AG04449 (cell line): ENCODE measurements at regions of chr15 and their contacts with region 1.

Region 1: DNA sequence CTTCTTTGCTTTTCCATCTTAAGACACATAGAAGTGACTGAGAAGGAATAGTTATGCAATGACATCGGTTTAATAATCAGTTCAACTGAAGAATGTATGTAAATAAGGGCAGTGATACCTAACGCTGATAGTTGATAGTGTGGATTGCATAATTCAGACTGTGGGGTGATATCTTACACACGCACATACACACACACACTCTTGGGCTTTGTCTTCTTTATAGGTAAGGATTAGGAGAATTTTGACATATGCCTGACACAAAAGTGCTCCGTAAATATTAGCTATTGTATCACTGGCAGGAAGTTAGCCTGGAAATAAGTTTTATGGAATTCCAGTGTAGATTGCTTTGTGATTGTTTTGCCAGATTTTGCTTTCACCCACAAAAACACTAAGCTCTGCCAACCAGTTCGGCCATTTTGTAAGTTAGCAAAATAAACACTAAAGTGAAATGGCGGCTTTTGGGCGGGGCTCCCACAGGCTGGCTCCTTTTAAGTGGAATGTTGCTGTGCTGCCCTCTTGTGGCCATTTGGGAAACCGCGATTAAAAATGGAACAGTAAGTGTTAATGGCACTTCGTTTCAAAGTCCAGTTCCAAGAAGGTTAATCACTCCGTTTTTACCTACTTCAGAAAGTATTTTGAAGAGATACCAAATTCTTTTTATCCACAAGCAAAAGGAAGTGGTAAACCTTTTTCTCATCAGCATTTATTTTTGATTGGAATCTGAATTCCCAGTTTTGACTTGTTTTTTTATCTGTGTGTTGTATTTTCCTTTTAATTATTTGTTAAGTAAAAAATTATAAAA is 17.7 kb downstream of the CHD2 start:
- DNase-seq: peak; percentile 54
- H3K4me3 ChIP-seq: no peak overlapping the region
- CTCF ChIP-seq: peak; percentile 64

Region 2: GRCh38 chr15:92693691-92694331 is 224.0 kb before region 1 on chr15:
- CTCF ChIA-PET with region 1: no interaction called
- POLR2A ChIA-PET with region 1: no interaction called
- DNase-seq: no peak
- H3K4me3 ChIP-seq: no peak overlapping the region
- CTCF ChIP-seq: peak; percentile 40

Region 3: DNA sequence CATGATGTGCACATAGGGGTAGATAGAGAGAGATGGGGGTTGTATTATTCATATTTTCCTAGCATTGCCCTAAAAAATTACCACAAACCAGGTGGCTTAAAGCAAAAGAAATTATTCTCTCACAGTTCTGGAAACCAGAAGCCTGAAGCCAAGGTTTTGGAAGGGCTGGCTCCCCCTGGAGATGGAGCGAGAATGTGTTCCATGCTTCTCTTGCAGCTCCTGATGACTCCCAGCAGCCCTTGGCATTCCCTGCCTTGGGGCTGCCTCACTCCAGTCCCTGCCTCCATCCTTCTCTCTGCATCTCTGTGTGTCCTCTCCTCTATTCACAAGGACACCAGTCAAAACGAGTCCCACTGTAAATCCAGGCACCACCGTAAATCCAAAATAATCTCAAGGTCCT is 170.8 kb before region 1 on chr15:
- CTCF ChIA-PET with region 1: no interaction called
- POLR2A ChIA-PET with region 1: no interaction called
- DNase-seq: no peak
- H3K4me3 ChIP-seq: no peak overlapping the region
- CTCF ChIP-seq: no peak

Region 4: GRCh38 chr15:92803847-92804609 is 113.8 kb before region 1 on chr15:
- CTCF ChIA-PET with region 1: interaction called, 118 read pairs
- POLR2A ChIA-PET with region 1: interaction called, 7 read pairs
- DNase-seq: peak; percentile 100
- H3K4me3 ChIP-seq: no peak overlapping the region
- CTCF ChIP-seq: no peak

Region 5: GRCh38 chr15:92808978-92809879 is 108.6 kb before region 1 on chr15:
- CTCF ChIA-PET with region 1: interaction called, 51 read pairs
- POLR2A ChIA-PET with region 1: interaction called, 7 read pairs
- DNase-seq: no peak
- H3K4me3 ChIP-seq: peak overlapping the region; percentile 60
- CTCF ChIP-seq: peak; percentile 73

Region 6: GRCh38 chr15:92903941-92904831 is 13.6 kb before region 1 on chr15:
- CTCF ChIA-PET with region 1: interaction called, 75 read pairs
- POLR2A ChIA-PET with region 1: interaction called, 5 read pairs
- DNase-seq: peak; percentile 88
- H3K4me3 ChIP-seq: peak overlapping the region; percentile 66
- CTCF ChIP-seq: no peak

Region 7: DNA sequence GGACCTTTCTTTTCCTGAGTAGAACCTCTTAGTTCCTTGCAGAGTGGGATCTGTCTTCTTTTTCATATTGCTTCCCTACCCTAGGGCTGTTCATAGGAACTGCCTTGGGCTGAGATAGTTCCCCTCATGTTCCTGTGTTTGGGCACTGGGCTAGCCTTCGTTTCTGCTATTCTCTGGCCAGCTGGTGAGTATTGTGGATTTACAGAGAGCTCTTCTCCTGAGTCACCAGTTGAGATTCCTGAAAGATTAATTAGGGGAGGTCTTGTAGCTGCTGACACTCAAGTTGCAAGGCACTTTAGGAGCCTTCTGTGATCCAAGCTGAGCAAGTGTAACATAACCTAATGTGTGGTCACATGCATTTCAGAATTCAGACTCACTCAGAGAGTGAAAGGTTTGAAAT is 13.0 kb after region 1 on chr15:
- CTCF ChIA-PET with region 1: interaction called, 90 read pairs
- POLR2A ChIA-PET with region 1: interaction called, 10 read pairs
- DNase-seq: peak; percentile 77
- H3K4me3 ChIP-seq: no peak overlapping the region
- CTCF ChIP-seq: no peak

Region 8: DNA sequence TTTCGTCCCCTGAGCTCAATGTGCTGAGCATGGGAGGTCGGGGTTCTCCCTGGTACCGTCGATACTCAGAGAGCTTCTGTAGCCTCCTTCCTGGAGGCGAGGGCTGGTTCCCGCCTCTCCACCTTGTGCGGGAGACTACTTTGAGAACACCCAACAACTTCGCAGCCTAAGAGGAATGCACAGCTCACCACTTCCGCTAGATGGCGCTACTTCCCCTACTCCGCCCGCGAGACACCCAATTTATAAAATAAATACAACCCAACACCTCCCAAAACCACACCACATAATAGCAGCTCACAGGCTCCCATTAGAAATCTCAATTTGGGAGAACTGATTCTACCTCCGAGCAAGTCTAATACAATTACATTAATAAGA is 170.0 kb after region 1 on chr15:
- CTCF ChIA-PET with region 1: no interaction called
- POLR2A ChIA-PET with region 1: no interaction called
- DNase-seq: no peak
- H3K4me3 ChIP-seq: no peak overlapping the region
- CTCF ChIP-seq: peak; percentile 76

Region 9: DNA sequence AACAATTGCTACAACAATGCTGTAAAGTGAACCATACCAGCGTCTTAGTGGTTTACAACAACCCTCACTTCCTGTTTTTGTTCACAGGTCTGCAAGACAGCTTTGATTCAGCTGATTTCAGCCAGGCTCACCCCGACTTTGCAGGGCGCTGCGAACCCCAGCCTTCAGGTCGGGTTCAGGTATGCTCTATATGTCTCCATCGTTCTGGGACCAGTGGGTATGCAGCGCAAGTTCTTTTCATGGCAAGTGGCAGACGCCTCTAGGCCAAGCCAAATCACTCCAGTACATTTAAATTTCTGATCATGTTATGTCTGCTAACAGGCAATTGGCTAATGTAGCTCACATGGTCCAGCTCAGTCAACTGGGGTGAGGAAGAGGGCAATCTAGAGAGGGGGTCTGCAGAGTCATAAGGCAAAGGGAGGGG is 223.6 kb after region 1 on chr15:
- CTCF ChIA-PET with region 1: no interaction called
- POLR2A ChIA-PET with region 1: no interaction called
- DNase-seq: no peak
- H3K4me3 ChIP-seq: no peak overlapping the region
- CTCF ChIP-seq: no peak